ENCODE measurements at regions of chr3 and their contacts with region 1.

Region 1: GRCh38 chr3:185659942-185660921 is 74.1 kb downstream of the SENP2 start:
- DNase-seq: peak; percentile 72
- H3K4me3 Mint-ChIP-seq: no peak overlapping the region
- H3K27ac Mint-ChIP-seq: no peak overlapping the region
- H3K4me1 Mint-ChIP-seq: peaks cover 12% of the 10 kb centered on the region
- H3K27me3 Mint-ChIP-seq: peaks cover 23% of the 10 kb centered on the region

Region 2: GRCh38 chr3:185585859-185586685 is 74.2 kb before region 1 on chr3 and contains the start of gene SENP2:
- CTCF ChIA-PET with region 1: interaction called, 10 read pairs
- POLR2A ChIA-PET with region 1: interaction called, 3 read pairs
- DNase-seq: peak; percentile 100
- H3K4me3 Mint-ChIP-seq: peak within 1 kb of the TSS; percentile 78
- H3K27ac Mint-ChIP-seq: peak within 1 kb of the TSS; percentile 82
- H3K4me1 Mint-ChIP-seq: peaks cover 36% of the 10 kb centered on the region
- H3K27me3 Mint-ChIP-seq: no peaks in the 10 kb centered on the region
- total RNA-seq, gene SENP2: 32.8 to 33.6 TPM

Region 3: DNA sequence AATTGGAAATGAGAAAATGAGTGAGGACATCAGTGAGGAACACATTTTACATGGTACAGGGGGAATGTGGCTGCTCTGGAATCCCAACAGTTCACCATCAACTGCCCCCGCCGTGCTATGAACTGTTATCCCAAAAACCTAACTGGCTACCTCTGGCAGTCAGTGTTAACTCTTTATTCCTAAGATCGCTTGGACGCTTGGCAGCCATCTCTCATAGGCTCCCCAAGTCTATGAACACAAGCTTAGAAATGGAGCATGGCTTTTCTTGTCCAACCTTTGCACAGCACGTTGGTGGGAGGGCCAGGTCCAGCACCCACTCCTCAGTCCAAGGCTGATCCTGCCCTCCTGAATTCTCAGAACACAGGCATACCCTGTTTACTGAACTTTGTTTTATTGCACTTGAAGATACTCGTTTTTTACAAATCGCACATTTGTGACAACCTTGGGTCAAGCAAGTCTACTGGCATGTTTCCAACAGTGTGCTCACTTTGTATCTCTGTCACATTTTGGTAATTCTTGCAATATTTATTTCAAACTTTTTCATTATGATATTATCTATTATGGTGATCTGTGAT is 20.5 kb before region 1 on chr3:
- CTCF ChIA-PET with region 1: interaction called, 13 read pairs
- POLR2A ChIA-PET with region 1: no interaction called
- DNase-seq: no peak
- H3K4me3 Mint-ChIP-seq: no peak overlapping the region
- H3K27ac Mint-ChIP-seq: no peak overlapping the region
- H3K4me1 Mint-ChIP-seq: no peaks in the 10 kb centered on the region
- H3K27me3 Mint-ChIP-seq: peaks cover 9% of the 10 kb centered on the region

Region 4: GRCh38 chr3:185677146-185677829 is 17.1 kb after region 1 on chr3:
- CTCF ChIA-PET with region 1: interaction called, 46 read pairs
- POLR2A ChIA-PET with region 1: no interaction called
- DNase-seq: no peak
- H3K4me3 Mint-ChIP-seq: no peak overlapping the region
- H3K27ac Mint-ChIP-seq: no peak overlapping the region
- H3K4me1 Mint-ChIP-seq: no peaks in the 10 kb centered on the region
- H3K27me3 Mint-ChIP-seq: peaks cover 48% of the 10 kb centered on the region

Region 5: GRCh38 chr3:185764163-185764979 is 104.1 kb after region 1 on chr3:
- CTCF ChIA-PET with region 1: interaction called, 77 read pairs
- POLR2A ChIA-PET with region 1: interaction called, 5 read pairs
- DNase-seq: no peak
- H3K4me3 Mint-ChIP-seq: no peak overlapping the region
- H3K27ac Mint-ChIP-seq: no peak overlapping the region
- H3K4me1 Mint-ChIP-seq: no peaks in the 10 kb centered on the region
- H3K27me3 Mint-ChIP-seq: peaks cover 52% of the 10 kb centered on the region

Measured in activated CD4-positive, alpha-beta memory T cell treated with anti-CD3 and anti-CD28 coated beads, Interleukin-2, amount 10 ng/mL, durations not matched to agents 7 days and 5 days (primary cell).